WTC11 (cell line): ENCODE measurements at regions of chr22 and their contacts with region 1.

Region 1: DNA sequence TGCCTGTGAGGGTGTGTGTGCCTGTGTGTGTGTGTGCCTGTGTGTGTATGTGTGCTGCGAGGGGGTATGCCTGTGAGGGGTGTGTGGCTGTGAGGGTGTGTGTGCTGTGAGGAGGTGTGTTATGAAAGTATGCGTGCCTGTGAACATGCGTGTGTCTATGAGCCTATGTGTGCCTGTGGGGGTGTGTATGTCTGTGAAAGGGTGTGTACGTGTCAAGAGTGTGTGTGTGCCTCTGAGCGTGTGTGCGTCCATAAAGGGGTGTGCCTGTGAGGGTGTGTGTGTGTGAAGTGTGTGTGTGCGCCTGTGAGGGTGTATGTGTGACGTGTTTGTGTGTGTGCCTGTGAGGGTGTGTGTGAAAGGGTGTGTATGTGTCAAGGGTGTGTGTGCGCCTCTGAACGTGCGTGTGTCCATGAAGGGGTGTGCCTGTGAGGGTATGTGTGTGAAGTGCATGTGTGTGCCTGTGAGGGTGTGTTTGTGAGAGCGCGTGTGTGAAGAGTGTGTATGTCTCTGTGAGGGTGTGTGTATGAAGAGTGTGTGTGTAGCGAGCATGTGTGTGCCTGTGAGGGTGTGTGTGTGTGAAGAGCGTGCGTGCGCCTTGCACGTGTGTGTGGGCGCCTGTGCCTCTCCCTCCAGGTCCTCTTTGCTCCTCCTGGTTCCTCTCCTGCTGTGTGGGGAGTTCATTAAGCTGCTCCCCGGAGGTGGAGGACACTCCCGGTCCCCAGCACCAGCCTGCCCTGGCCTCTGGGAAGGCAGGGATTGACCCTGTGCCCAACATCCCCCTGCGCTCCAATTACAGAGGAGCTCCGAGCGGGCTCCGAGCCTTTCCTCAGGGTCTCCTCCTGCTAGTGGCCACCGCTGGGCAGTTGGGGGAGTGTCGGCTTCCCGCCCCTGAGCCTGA is 53.3 kb downstream of the CACNA1I start:
- DNase-seq: peak; percentile 51
- ATAC-seq: peak; percentile 54
- H3K4me3 Mint-ChIP-seq: no peak overlapping the region
- H3K27ac Mint-ChIP-seq: no peak overlapping the region; the same call in 1 of the 2 replicates
- H3K4me1 Mint-ChIP-seq: peaks cover 17% of the 10 kb centered on the region
- H3K27me3 Mint-ChIP-seq: no peaks in the 10 kb centered on the region
- CTCF ChIP-seq: no peak

Region 2: DNA sequence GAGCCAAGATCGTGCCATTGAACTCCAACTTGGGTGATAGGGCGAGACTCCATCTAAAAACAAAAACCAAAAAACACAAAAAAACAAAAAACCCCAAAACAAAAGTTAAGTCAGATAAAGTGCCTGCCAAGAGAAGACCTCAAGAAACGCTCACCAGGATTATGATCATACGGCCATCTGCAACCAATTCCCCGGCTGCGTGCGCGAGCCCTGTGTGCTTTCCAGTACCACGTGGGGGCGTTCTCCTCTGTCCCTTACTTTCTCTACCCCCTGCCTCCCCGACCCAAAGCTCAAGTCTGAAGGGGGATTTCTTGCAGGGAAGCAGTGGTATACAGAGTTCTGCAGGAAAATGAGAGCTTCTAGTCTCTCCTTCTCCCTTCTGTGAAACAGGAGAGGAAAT is 80.8 kb before region 1 on chr22:
- CTCF ChIA-PET with region 1: interaction called, 11 read pairs
- POLR2A ChIA-PET with region 1: interaction called, 3 read pairs
- DNase-seq: peak; percentile 74
- ATAC-seq: peak; percentile 82
- H3K4me3 Mint-ChIP-seq: no peak overlapping the region
- H3K27ac Mint-ChIP-seq: no peak overlapping the region
- H3K4me1 Mint-ChIP-seq: peaks cover 18% of the 10 kb centered on the region
- H3K27me3 Mint-ChIP-seq: peaks cover 33% of the 10 kb centered on the region
- CTCF ChIP-seq: 0 out of 2 replicates have a peak, but pooled peaks have one; percentile 14

Region 3: DNA sequence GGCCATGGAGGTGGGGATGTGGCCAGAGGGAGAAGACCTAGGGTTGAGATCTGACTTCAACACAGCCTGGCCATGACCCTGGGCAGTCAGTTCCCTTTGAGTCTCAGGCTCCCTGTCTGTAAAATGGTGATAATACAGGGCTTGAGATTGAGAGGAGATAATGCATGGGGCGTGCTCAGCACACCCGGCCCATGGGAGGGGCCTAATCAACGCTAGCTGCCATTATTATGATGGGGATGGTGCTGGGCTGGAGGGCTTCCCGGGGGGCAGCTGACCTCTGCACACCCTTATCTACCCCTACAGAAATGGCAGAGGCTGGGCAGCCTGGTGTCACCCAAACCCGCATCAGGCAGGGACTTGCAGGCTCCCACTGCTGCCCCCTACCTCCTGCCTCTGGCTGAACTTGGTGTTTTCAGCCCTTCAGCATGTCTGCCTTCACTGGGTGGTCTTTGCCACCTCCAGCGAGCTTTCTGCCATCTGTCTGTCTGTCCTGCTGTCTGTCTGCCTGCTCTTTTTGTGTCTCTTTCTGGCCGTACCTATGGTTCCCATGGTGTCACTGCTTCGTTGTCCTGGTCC is 31.2 kb after region 1 on chr22:
- CTCF ChIA-PET with region 1: interaction called, 15 read pairs
- POLR2A ChIA-PET with region 1: no interaction called
- DNase-seq: peak; percentile 53
- ATAC-seq: peak; percentile 51; the same call in 1 of the 2 replicates
- H3K4me3 Mint-ChIP-seq: no peak overlapping the region
- H3K27ac Mint-ChIP-seq: no peak overlapping the region
- H3K4me1 Mint-ChIP-seq: 0 out of 2 replicates have a peak, but pooled peaks cover 2% of the 10 kb centered on the region
- H3K27me3 Mint-ChIP-seq: peaks cover 6% of the 10 kb centered on the region
- CTCF ChIP-seq: no peak